Spleen (tissue), 13 donors: ENCODE measurements at regions of chr6 and their contacts with region 1.

Region 1: DNA sequence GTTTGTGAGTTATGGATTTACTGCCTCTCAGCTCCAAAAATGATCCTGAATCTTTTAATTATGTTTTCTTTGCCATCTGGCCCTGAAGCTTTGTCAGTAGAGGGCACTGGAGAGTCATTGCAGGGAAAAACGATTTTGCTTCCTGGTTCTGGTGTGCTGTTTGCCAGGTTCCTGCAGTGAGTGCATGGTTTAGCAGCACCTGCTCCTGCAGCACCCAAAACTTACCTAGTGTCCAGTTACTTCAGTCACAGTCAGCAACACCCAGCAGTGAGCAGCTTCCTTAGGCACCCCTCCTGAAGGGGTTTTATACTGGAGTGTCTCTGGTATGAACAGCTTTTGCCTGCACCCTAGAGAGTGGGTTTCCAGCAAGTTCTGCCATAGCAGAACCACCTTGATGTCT is 6.0 kb upstream of the TRIM26 start:
- DNase-seq: no peak
- H3K4me3 ChIP-seq: no peak overlapping the region
- H3K27ac ChIP-seq: no peak overlapping the region
- H3K4me1 ChIP-seq: peaks cover 0 to 21% (median 15%) of the 10 kb centered on the region in 6 donors
- H3K27me3 ChIP-seq: no peaks in the 10 kb centered on the region
- CTCF ChIP-seq: peak in 10 of 11 experiments; percentile 29 to 76 (median 68)
- POLR2A ChIP-seq: no peak

Region 2: GRCh38 chr6:29942275-29943052 is 276.8 kb before region 1 on chr6 and contains the start of gene HLA-A:
- intact Hi-C with region 1: no loop called
- DNase-seq: peak; percentile 94
- H3K4me3 ChIP-seq: peak within 1 kb of the TSS; percentile 39 to 79 (median 56)
- H3K27ac ChIP-seq: peak within 1 kb of the TSS; percentile 63 to 96 (median 92)
- H3K4me1 ChIP-seq: peaks cover 3 to 58% (median 17%) of the 10 kb centered on the region in 6 donors
- H3K27me3 ChIP-seq: no peaks in the 10 kb centered on the region
- CTCF ChIP-seq: no peak
- POLR2A ChIP-seq: peak; percentile 88 to 95 (median 92)
- total RNA-seq, gene HLA-A: 1,154 to 1,886 (median 1,537) TPM

Region 3: DNA sequence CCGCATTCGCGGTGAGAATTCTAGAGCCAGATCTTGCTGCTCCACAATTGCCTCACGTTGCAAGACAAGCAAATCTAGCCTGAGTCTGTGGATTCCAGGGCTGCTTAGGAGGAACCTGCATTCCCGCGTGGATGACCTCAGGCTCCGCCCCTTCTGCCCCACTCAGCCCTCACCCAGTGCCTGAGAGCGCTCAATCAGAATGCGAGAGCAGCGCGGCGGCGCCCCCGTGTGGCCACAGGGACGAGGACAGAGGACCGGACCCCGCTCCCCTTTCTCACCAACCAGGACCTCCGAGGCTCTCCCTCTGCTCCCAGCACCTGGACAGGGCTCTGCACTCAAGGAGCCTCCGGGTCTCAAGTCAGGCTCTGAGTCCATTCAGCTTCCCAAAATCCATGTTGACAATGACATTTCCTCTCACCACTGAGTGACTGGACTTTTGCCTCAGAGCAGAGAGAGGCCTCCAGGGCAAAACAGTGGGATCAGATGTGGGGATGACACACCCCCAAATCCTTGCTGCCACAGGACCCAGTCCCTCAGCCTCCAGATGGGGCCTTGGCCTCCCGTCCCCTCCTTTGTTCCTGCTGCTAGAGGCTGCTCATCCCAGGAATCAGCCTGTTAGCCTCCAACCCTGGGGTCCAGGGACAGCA is 177.7 kb after region 1 on chr6:
- intact Hi-C with region 1: loop called (anchors 5 kb)
- DNase-seq: peak; percentile 96
- H3K4me3 ChIP-seq: no peak overlapping the region
- H3K27ac ChIP-seq: no peak overlapping the region
- H3K4me1 ChIP-seq: peaks cover 0 to 8% (median 6%) of the 10 kb centered on the region in 6 donors
- H3K27me3 ChIP-seq: peaks cover 0 to 54% (median 11%) of the 10 kb centered on the region in 7 donors
- CTCF ChIP-seq: peak; percentile 52 to 92 (median 82)
- POLR2A ChIP-seq: no peak

Region 4: GRCh38 chr6:30418448-30418847 is 199.2 kb after region 1 on chr6:
- intact Hi-C with region 1: no loop called
- DNase-seq: no peak
- H3K4me3 ChIP-seq: no peak overlapping the region
- H3K27ac ChIP-seq: no peak overlapping the region
- H3K4me1 ChIP-seq: no peaks in the 10 kb centered on the region
- H3K27me3 ChIP-seq: peaks cover 0 to 72% (median 4%) of the 10 kb centered on the region in 7 donors
- CTCF ChIP-seq: no peak
- POLR2A ChIP-seq: no peak